ENCODE measurements at regions of chr17 and their contacts with region 1.

Region 1: GRCh38 chr17:17859909-17860765 is 23.4 kb upstream of the SREBF1 start:
- DNase-seq: peak; percentile 73
- ATAC-seq: peak; percentile 85 to 91

Region 2: DNA sequence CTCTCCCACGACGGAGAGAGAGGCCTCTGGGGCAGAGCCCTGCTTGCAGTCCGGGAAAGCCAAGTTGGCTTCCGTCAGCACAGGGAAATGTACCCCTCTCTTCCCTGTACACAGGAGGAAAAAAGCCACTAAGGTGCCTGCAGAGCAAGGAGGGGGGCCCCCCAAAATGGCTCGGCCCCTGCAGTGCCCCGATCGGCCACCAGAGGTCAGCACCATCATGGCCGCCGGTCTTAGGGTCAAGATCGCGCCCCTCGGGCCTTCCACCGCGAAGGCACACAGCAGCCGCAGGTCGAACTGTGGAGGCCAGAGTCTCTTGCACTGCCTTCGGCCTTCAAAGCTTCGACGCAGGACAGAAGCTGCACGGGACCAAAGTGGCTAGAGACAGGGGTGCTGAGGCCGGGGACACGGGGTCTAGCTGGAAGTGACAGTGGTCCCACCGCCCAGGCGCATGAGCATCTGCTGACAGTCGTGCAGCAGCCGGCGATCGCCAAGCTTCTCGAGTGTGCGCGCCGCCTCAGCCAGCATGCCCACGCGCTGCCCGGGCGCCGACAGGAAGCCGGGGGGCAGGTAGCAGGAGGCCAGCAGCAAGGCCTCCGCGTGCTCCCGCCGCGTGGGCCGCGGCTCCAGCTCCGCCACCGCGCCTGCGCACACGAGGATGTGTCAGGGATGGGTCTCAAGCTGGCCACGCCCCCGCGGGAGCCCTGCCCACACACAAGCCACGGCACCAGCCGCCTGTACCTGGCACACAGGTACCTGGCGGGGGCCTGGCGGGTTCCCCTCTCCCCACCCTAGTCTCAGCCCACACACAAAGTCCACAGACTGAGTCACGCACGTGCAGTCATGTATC is 47.7 kb before region 1 on chr17:
- intact Hi-C with region 1: loop called (anchors 1 to 2 kb)
- DNase-seq: peak; percentile 78
- ATAC-seq: peak; percentile 17 to 18

Region 3: DNA sequence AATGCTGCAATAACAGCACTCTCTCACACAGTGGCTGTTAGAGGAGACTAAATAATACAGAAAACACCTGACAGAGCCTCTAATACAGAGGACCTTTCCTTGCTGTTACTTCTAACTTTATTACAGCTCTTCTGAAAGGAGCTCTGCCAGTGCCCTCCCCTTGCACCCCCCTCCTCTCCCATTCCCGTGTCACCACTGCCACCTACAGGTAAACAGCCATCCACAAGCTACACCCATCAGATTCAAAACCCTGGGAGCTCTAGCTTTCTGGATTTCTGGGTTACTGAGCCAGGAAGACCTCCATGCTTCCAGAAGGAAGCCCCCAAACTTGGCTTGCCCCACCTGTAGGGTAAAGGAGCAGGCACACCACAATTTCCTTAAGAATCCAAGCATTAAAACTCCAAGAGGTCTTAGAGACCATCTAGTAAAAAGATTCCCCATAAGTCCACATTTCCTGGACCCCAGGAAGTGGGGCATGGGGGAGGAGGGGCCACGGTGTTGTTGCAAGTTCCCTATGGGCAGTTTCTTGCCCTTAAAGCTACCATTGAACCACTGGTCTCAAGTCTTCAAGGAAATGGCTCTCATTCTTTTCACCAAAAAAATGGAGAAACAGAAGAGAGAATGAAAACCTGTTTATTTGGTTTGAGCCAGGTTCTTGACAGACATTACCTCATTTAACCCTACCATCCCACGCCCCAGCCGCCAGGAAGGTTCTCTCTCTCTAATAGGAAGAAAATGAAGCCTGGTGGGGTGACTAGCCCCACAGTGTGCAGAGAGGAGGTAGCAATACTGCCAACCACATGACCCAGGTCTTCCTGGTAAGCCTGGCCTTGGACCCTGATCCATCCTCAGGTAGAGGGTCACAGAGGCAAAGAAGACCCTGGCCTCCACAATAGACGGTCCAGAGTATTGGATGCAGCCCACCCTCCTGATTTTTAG is 59.3 kb after region 1 on chr17:
- intact Hi-C with region 1: loop called in 1 of 2 experiments (anchors 10 kb)
- DNase-seq: peak; percentile 77
- ATAC-seq: peak; percentile 75 to 77

Region 4: DNA sequence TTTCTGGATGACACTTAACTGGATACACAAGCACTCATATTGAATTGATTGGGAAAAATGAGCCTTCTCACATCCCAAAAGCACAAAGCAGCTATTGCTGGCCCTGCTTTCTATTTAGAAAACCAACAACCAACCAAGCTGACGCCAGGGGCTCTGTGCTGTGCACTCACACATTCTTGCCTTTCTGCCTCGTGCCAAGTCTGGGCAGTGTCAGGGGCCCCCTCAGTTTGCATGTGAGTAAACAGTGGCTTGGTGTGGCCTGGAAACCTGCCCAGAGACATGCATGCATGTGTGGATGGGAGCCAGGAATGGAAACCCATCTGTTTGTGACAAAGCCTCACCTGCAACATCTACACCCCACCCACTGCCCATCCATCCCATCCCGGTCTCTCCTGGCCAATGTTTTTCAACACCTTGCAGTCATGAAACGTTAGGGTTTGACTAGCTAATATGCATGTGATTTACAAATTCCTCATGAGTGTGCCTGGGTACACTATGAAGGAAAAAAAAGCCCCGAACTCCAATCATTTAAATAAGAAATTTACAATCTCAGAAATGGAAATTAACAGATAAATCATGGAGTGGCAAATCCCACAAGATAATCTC is 420.7 kb after region 1 on chr17:
- intact Hi-C with region 1: no loop called
- DNase-seq: no peak
- ATAC-seq: peak in 1 of 2 donors; percentile 58